ENCODE measurements at regions of chr3 and their contacts with region 1.

Region 1: GRCh38 chr3:124650798-124651197 is 79.5 kb upstream of the UMPS start:
- DNase-seq: peak; percentile 57
- CTCF ChIP-seq: no peak

Region 2: DNA sequence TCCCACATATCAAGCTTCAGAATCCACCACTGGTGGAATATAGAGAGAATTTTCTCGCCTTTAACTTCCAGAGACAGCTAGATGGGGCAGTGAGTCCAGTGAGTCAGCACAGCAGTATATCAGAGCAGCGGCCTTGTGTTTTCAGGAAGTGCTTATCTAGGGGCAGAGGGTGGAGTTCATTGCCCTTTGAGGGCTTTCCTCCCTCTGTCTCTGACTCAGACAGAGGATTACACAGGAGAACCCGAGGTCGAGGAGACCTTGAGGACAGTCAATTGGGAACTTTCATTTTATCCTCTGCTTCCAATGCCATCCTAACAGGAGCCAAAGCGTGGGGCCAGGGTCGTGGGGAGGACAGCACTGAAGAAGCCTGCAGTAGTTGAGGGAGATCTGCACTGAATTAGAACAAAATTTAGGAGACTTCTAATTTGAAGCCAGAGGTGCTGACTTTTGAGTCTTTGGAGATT is 30.2 kb before region 1 on chr3:
- CTCF ChIA-PET with region 1: no interaction called
- POLR2A ChIA-PET with region 1: no interaction called
- DNase-seq: peak; percentile 47
- CTCF ChIP-seq: peak; percentile 42

Region 3: DNA sequence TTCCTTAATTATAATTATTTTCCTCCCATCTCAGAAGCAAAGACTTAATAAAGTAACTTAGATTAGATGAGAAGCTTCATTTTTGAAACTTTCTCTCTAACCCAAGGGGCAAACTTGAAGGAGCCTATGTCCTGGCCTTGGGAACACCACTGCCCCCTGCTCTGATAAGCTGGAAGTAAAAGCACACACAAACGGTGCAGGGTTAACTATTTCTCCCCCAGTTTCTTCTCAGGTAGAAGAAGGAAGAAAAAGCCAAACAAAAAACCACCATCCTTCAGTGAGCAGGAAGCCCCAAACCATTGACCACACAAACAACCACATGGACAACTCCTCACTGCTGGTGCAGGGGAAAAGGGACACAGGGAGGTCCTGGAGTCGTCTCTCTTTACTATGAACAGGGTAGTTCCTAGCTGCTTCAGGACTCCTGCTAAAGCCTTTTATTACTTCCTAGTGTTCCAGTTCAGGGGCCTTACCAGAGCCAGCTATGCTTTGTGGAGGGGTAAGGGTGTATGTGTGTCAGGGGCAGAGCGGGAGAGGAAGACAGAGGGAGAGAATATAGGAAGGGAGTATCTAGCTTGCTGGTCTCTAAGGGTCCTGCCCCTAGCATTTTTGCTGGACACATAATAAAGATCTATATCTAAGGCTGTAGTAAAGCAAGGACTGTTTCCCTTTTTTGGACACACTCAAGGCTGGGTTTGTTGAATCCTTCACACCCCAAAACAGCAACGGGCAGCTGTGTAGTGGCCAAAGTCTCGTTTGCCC is 14.5 kb before region 1 on chr3:
- CTCF ChIA-PET with region 1: interaction called, 12 read pairs
- POLR2A ChIA-PET with region 1: no interaction called
- DNase-seq: no peak
- CTCF ChIP-seq: no peak

Region 4: GRCh38 chr3:124663690-124664089 is 12.9 kb after region 1 on chr3:
- CTCF ChIA-PET with region 1: interaction called, 11 read pairs
- POLR2A ChIA-PET with region 1: no interaction called
- DNase-seq: no peak
- CTCF ChIP-seq: no peak

Measured in GM10248 (cell line).